CD4-positive, alpha-beta memory T cell (primary cell): ENCODE measurements at regions of chr1 and their contacts with region 1.

Region 1: DNA sequence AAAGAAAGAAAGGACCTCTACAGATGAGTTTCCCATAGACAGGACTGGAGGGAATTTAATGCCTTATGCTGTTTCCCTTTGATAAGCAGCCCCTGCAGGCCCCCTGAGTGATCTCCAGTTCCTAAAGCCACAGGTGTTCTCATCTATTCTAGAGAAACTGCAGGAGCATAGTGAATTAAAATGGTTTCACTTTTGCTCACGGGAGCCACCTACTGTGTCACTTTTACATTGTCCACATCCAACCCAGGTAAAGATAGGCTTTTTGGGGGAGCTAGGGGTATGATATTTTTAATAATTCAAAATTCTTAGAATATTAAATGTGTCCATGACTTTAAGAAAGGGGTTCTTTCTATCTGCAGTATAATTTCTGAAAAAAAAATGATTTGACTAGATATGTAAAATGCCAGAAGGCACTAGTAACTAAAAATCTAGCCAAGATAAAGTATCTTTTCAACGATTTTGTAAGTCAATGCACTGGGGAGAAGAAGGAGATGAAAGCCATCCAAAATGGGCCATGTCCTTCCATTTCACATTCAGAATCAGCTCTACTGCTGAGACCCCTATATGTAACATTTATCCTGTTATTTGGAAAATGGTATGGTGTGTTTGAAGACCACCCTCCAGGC is 267.3 kb upstream of the DUSP10 start:
- DNase-seq: peak in 4 of 5 donors; percentile 17 to 26 (median 18)
- H3K4me3 ChIP-seq: no peak overlapping the region
- H3K4me3 Mint-ChIP-seq: peak overlapping the region in 2 of 8 donors; percentile 49 to 52
- H3K27ac ChIP-seq: no peak overlapping the region
- H3K27ac Mint-ChIP-seq: peak overlapping the region in 1 of 7 donors; percentile 19
- H3K4me1 ChIP-seq: no peaks in the 10 kb centered on the region
- H3K4me1 Mint-ChIP-seq: peaks cover 0 to 2% (median 0%) of the 10 kb centered on the region in 4 donors
- H3K27me3 ChIP-seq: no peaks in the 10 kb centered on the region
- H3K27me3 Mint-ChIP-seq: peaks cover 0 to 2% of the 10 kb centered on the region in 2 donors

Region 2: GRCh38 chr1:220810179-220810653 is 1199.0 kb before region 1 on chr1:
- CTCF ChIA-PET with region 1: no interaction called
- POLR2A ChIA-PET with region 1: no interaction called
- intact Hi-C with region 1: loop called (anchors 5 kb)
- DNase-seq: peak; percentile 55 to 66 (median 59)
- H3K4me3 ChIP-seq: no peak overlapping the region
- H3K4me3 Mint-ChIP-seq: peak overlapping the region in 7 of 8 donors; percentile 50 to 69 (median 55)
- H3K27ac ChIP-seq: no peak overlapping the region
- H3K27ac Mint-ChIP-seq: peak overlapping the region in 1 of 7 donors; percentile 66
- H3K4me1 ChIP-seq: no peaks in the 10 kb centered on the region
- H3K4me1 Mint-ChIP-seq: peaks cover 1 to 8% (median 4%) of the 10 kb centered on the region in 4 donors
- H3K27me3 ChIP-seq: no peaks in the 10 kb centered on the region
- H3K27me3 Mint-ChIP-seq: peaks cover 16 to 24% of the 10 kb centered on the region in 2 donors